Astrocyte of the cerebellum (primary cell): ENCODE measurements at regions of chr2 and their contacts with region 1.

Region 1: DNA sequence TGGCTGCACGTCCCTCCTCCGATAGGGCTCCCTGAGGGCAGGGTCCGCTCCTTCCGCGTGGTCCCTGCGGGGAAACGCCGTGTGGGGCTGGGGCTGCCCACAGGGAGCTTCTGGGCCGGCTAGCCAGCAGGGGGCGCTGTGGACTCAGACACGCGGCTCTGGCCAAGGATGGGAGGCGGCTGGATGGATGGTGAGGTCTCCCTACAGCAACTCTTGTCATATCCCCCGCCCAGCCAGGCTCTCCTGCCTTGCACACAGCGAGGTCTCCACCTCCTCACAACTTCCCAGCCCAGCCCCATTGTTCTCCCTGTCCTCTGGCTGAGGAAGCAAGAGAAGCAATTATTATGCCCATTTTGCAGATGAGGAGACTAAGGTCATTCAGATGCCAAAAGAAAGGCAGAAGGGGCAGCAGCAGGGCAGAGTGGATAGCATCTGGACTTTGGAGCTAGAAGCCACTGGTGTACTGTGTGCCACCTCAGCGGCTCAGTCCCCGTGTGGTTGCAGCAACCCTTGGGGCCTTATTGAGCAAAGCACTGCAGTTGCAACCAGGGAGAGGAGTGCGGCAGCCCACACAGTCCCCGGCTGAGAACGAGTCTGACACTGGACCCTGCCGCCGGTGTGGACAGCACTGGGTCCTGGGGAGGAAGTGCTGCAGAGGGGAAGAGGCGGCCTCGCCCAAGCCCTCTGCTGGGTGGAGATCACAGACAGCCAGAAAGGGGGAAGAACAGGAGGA is 99.0 kb downstream of the ZFP36L2 start:
- DNase-seq: no peak
- H3K4me3 ChIP-seq: no peak overlapping the region
- CTCF ChIP-seq: peak; percentile 50

Region 2: DNA sequence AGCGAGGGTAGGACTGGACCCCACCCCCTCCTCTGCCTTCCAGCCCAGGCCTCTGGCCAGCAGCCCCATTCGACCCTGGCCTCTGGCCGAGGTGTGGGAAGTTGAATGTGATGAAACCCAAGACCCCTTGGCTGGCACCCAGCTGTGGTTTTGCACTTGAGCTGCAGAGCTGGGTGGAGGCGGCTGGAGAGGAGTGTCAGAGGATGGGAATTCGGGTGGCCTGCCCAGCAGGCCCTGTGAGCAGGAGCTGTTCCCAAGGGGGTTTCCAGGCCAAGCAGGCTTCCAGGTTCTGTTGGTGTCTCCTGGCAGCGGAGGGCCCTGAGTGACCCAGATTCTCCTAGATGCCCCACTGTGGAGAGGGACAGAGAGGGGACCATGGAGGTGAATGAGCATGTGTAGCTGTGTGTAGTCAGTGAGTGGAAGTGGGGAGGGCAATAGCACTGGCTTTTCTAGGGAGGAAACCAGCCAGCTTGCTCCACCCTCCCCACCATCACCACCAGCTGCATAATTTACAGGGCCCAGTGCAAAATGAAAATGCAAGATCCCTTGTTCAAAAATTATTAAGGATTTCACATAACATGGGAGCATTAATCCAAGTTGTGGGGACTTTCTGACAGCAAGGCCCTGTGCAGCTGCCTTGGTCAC is 162.8 kb before region 1 on chr2:
- in situ Hi-C with region 1: no loop called
- DNase-seq: peak; percentile 94
- H3K4me3 ChIP-seq: no peak overlapping the region
- CTCF ChIP-seq: no peak

Region 3: DNA sequence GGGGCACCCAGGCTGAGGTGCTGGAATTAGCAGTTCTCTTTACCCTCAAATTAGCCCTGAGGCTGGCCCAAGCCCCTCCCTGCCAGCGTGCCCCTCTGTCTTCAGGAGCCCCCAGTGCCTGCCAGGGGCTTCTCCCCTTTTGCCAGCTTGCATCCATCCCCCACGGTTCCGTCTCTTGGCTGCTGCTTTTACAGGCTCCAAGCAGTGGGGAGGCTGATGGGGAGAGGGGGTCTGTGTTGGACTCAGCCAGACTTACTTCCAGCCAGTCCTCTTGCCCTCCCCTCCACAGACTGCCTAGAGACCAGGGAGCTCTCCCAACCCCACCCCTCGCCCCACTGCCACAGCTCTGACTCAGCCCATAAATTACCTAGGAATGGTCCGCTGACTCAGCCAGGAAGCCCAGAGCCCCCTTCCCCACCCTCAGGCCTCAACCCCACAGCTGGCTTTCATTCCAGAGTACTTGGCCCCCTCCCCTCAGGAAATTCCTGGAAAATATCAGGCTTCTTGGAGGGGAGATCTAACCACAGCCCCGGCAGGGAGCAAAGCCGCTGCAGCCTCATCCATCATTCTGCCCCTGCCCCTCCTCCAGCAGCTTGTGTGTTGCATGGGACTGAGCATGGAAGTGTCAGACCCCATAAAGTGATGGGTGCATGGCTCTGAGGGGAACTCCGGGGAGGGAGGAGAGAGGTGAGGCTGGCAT is 85.6 kb before region 1 on chr2:
- in situ Hi-C with region 1: loop called (anchors 5 kb)
- DNase-seq: peak; percentile 99
- H3K4me3 ChIP-seq: no peak overlapping the region
- CTCF ChIP-seq: no peak

Region 4: GRCh38 chr2:43184339-43184895 is 57.0 kb after region 1 on chr2:
- in situ Hi-C with region 1: loop called (anchors 10 kb)
- DNase-seq: no peak
- H3K4me3 ChIP-seq: no peak overlapping the region
- CTCF ChIP-seq: no peak